AG04449 (cell line): ENCODE measurements at regions of chr5 and their contacts with region 1.

Region 1: GRCh38 chr5:150458819-150459557 is 9.4 kb upstream of the RPS14 start:
- DNase-seq: no peak
- H3K4me3 ChIP-seq: peak overlapping the region; percentile 18
- CTCF ChIP-seq: peak; percentile 93

Region 2: DNA sequence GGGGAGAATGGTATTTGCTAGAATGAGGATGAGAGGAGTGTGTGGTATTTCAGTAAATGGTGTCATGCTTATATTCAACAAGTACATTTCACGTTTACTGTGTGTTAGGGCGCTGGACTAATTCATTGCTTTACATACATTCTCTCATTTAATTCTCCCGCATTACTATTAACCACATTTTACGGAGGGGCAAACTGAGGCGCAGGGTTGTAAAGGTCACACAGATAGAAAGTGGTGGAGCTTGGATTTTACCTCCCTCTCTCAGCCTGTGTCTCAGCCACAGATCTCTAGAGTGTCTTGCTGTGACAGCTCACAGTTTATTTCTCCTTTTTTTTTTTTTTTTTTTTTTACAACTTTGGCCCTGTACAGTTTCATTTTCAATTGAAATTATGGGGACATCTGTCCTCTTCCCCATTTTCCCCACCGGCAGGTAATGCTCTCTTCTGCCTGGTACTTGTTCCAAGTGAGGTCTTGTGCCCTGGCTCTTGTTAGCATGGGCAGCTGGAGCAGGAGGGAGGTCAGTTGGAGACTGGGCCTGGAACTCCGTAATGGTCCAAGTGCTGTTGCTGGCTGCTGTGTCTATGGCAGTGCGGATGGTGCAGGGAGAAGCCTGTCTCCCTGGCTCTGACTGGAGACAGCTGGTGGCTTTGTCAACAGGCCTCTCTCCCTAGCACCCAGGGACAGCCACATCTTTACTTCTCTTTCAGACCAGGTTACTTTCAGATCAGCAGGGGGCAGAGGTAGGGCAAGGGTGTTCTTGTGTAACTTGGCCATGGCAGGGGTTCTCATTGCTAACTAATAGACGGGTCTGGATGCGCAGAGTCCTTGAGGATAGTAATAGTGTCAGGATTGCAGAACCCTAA is 28.4 kb after region 1 on chr5:
- CTCF ChIA-PET with region 1: interaction called, 21 read pairs
- POLR2A ChIA-PET with region 1: no interaction called
- DNase-seq: no peak
- H3K4me3 ChIP-seq: peak overlapping the region; percentile 87
- CTCF ChIP-seq: peak; percentile 17

Region 3: GRCh38 chr5:150523472-150524350 is 64.7 kb after region 1 on chr5:
- CTCF ChIA-PET with region 1: interaction called, 124 read pairs
- POLR2A ChIA-PET with region 1: no interaction called
- DNase-seq: no peak
- H3K4me3 ChIP-seq: no peak overlapping the region
- CTCF ChIP-seq: peak; percentile 69

Region 4: DNA sequence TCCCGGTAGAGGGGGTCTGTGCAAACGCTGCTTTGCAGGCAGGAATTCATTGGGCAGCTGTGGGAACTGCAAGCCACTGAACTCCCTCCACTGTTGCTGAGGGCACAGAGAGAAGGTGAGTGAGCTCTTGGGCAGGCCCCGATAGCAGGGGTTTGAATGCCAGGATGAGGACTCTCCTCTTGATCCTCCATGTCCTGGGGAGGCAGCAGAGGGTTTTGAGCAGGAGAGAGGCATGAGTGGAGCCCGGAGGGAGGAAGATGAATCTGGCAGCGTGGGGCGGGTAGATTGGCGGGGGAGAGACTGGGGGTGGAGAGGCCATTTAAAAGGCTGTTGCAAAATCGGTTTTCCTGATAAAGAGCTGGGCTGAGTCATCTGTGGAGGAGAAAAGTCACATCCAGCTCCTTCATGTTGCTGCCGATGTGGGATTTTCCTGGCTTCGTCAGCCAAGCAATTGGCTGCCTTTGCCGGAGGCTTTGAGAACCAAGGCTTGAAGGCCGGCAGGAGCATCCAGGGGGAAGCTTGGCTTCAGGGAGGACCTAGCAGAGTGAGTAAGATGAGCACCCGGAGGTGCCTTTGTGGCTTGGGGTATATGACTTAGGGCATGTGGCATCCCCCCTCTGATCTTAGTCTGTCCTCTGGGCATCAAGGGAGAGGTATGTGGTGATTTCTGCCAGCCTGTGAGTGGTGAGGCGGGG is 181.5 kb after region 1 on chr5 and contains the start of gene SYNPO:
- CTCF ChIA-PET with region 1: interaction called, 10 read pairs
- POLR2A ChIA-PET with region 1: no interaction called
- DNase-seq: peak; percentile 79
- H3K4me3 ChIP-seq: peak within 1 kb of the TSS; percentile 76
- CTCF ChIP-seq: no peak

Region 5: DNA sequence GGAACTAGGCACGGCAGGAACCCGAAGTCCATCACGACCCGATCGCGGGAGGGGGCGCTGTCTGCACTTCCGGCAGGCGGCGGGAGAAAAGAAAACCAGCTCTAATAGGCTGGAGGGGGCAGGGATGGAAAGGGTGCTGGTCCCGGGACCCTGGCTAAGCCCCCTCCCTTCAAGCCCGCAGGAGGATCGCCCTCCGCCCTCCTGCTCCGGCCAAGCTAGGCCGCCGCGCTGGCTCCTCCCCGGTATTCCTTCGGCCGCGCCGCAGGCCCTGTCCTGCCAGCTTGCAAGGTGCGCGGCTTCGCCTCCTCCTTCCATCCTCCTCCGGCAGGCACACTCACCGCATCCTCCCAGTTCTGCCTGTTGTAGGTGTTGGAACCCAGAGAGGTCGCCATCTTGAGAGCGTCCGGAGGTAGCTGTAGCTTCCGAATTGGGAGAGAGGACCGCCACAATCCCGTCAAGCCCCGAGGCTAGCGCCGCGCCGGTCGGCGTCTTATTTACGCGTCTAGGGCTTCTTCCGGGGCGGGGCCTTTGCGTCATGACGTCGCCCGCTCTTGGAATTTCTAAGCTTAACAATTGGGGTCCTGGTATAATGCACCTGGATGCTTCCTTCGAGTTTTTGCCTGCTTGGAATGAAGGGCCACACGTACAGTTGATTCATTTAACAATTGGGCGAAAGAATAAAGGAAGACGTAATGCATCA is 241.8 kb after region 1 on chr5 and contains the start of gene RBM22:
- CTCF ChIA-PET with region 1: interaction called, 21 read pairs
- POLR2A ChIA-PET with region 1: no interaction called
- DNase-seq: peak; percentile 26
- H3K4me3 ChIP-seq: peak within 1 kb of the TSS; percentile 96
- CTCF ChIP-seq: peak; percentile 77